ENCODE measurements at regions of chrX and their contacts with region 1.

Region 1: GRCh38 chrX:33336783-33337182 is 125.4 kb upstream of the DMD start:
- DNase-seq: peak; percentile 21
- ATAC-seq: no peak

Region 2: GRCh38 chrX:33138677-33139249 is 198.0 kb before region 1 on chrX:
- intact Hi-C with region 1: loop called in 1 of 2 experiments (anchors 10 kb)
- DNase-seq: no peak
- ATAC-seq: no peak

Region 3: GRCh38 chrX:33434256-33435092 is 97.7 kb after region 1 on chrX:
- intact Hi-C with region 1: no loop called
- DNase-seq: peak; percentile 42
- ATAC-seq: peak in 1 of 2 donors; percentile 23

Region 4: DNA sequence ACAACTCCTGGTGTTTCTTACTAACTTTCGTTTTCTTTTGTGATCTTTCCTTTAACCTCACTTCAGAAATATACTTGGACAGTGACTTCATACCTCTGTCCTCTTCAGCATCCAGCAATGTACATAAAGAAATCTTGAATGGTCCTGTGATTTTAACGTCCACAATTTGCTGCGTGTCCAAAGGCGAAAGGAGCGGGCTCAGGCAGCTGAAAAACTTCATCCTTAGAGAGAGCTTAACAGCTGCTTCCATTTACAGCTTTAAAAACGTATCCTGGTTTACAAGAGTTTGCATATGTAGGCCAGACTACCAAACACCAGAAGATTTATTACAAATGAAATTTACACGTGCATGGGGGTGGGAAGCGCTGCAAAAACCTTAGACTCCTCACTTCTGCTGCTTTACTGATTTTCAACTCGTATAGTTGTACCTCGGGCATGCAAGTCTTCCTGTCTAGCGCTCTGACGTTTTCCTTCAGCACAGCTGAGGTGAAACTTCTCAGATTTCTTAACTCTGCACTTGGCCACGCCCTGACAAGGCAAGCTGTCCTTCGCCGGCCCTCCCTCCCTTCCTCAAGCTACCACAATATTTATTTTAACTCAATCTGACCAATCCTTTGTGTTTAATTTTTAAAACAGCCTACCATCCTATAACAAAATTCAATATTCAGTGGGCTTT is 388.9 kb after region 1 on chrX:
- intact Hi-C with region 1: no loop called
- DNase-seq: peak; percentile 26
- ATAC-seq: peak in 1 of 2 donors; percentile 83

Measured in left cardiac atrium (tissue), 4 donors.